Right lobe of liver (tissue), 6 donors: ENCODE measurements at regions of chr6 and their contacts with region 1.

Region 1: GRCh38 chr6:56902641-56903464 is 52.1 kb upstream of the BEND6 start:
- DNase-seq: no peak
- ATAC-seq: peak; percentile 56 to 70 (median 68)
- H3K4me3 ChIP-seq: no peak overlapping the region
- H3K27ac ChIP-seq: no peak overlapping the region
- H3K4me1 ChIP-seq: no peaks in the 10 kb centered on the region
- H3K27me3 ChIP-seq: no peaks in the 10 kb centered on the region
- CTCF ChIP-seq: peak; percentile 51 to 78 (median 70)
- POLR2A ChIP-seq: no peak

Region 2: GRCh38 chr6:57316581-57317059 is 413.8 kb after region 1 on chr6:
- intact Hi-C with region 1: loop called in 1 of 2 experiments (anchors 10 kb)
- DNase-seq: peak; percentile 75 to 83 (median 81)
- ATAC-seq: peak; percentile 94 to 95 (median 95)
- H3K4me3 ChIP-seq: peak overlapping the region; percentile 55 to 61 (median 58)
- H3K27ac ChIP-seq: peak overlapping the region; percentile 31 to 69 (median 39)
- H3K4me1 ChIP-seq: peaks cover 0 to 5% (median 0%) of the 10 kb centered on the region in 4 donors
- H3K27me3 ChIP-seq: no peaks in the 10 kb centered on the region
- CTCF ChIP-seq: peak; percentile 66 to 83 (median 80)
- POLR2A ChIP-seq: no peak